ENCODE measurements at regions of chr11 and their contacts with region 1.

Region 1: GRCh38 chr11:129750349-129751292 is 65.0 kb upstream of the TMEM45B start:
- DNase-seq: peak; percentile 80 to 93
- H3K4me3 ChIP-seq: peak overlapping the region; percentile 18; the same call in 1 of the 2 replicates
- H3K4me3 Mint-ChIP-seq: peak overlapping the region; percentile 50
- H3K27ac Mint-ChIP-seq: no peak overlapping the region
- H3K4me1 ChIP-seq: peaks cover 5% of the 10 kb centered on the region
- H3K4me1 Mint-ChIP-seq: no peaks in the 10 kb centered on the region
- H3K27me3 ChIP-seq: no peaks in the 10 kb centered on the region
- H3K27me3 Mint-ChIP-seq: no peaks in the 10 kb centered on the region
- CTCF ChIP-seq: peak; percentile 100

Region 2: GRCh38 chr11:128884703-128885338 is 865.8 kb before region 1 on chr11:
- CTCF ChIA-PET with region 1: no interaction called
- POLR2A ChIA-PET with region 1: no interaction called
- intact Hi-C with region 1: loop called (anchors 2 kb)
- DNase-seq: peak; percentile 78 to 91
- H3K4me3 ChIP-seq: no peak overlapping the region
- H3K4me3 Mint-ChIP-seq: no peak overlapping the region
- H3K27ac Mint-ChIP-seq: no peak overlapping the region
- H3K4me1 ChIP-seq: no peaks in the 10 kb centered on the region; the same call in 1 of the 2 replicates
- H3K4me1 Mint-ChIP-seq: no peaks in the 10 kb centered on the region
- H3K27me3 ChIP-seq: no peaks in the 10 kb centered on the region; the same call in none of the 2 replicates
- H3K27me3 Mint-ChIP-seq: peaks cover 33% of the 10 kb centered on the region
- CTCF ChIP-seq: peak; percentile 96 to 97

Region 3: GRCh38 chr11:129410395-129410960 is 340.1 kb before region 1 on chr11:
- CTCF ChIA-PET with region 1: no interaction called
- POLR2A ChIA-PET with region 1: no interaction called
- intact Hi-C with region 1: loop called (anchors 1 kb)
- DNase-seq: peak; percentile 59 to 65
- H3K4me3 ChIP-seq: no peak overlapping the region
- H3K4me3 Mint-ChIP-seq: no peak overlapping the region
- H3K27ac Mint-ChIP-seq: no peak overlapping the region
- H3K4me1 ChIP-seq: peaks cover 10% of the 10 kb centered on the region; the same call in 1 of the 2 replicates
- H3K4me1 Mint-ChIP-seq: peaks cover 14% of the 10 kb centered on the region
- H3K27me3 ChIP-seq: no peaks in the 10 kb centered on the region
- H3K27me3 Mint-ChIP-seq: no peaks in the 10 kb centered on the region
- CTCF ChIP-seq: peak; percentile 56 to 74

Region 4: GRCh38 chr11:129695575-129696308 is 54.9 kb before region 1 on chr11:
- CTCF ChIA-PET with region 1: interaction called, 12 read pairs
- POLR2A ChIA-PET with region 1: no interaction called
- intact Hi-C with region 1: loop called (anchors 1 kb)
- DNase-seq: peak; percentile 76 to 83
- H3K4me3 ChIP-seq: no peak overlapping the region
- H3K4me3 Mint-ChIP-seq: no peak overlapping the region
- H3K27ac Mint-ChIP-seq: no peak overlapping the region
- H3K4me1 ChIP-seq: peaks cover 7% of the 10 kb centered on the region; the same call in 1 of the 2 replicates
- H3K4me1 Mint-ChIP-seq: peaks cover 5% of the 10 kb centered on the region
- H3K27me3 ChIP-seq: no peaks in the 10 kb centered on the region
- H3K27me3 Mint-ChIP-seq: no peaks in the 10 kb centered on the region
- CTCF ChIP-seq: peak; percentile 83 to 92

Region 5: DNA sequence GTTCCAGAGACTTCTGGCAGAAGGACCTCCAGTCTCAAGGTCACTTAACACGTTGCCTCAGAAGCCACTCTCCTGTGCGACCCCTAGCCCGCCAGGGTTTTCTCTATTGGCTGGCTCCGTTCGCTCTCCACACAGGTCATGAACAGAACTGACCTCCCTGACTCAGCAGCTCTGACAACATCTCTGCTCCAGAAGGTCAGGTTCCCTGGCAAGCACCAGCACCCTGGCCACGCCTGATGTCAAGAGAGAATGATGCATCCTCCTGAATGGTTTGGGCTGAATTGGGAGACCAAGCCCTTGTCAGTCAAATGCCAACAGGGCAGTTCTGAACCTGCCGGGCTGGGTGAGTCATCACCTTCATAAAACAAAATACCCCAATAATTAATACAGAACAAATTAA is 19.3 kb before region 1 on chr11:
- CTCF ChIA-PET with region 1: interaction called, 4 read pairs
- POLR2A ChIA-PET with region 1: no interaction called
- intact Hi-C with region 1: loop called (anchors 2 kb)
- DNase-seq: no peak
- H3K4me3 ChIP-seq: no peak overlapping the region
- H3K4me3 Mint-ChIP-seq: no peak overlapping the region
- H3K27ac Mint-ChIP-seq: no peak overlapping the region
- H3K4me1 ChIP-seq: peaks cover 4% of the 10 kb centered on the region; the same call in 1 of the 2 replicates
- H3K4me1 Mint-ChIP-seq: peaks cover 7% of the 10 kb centered on the region
- H3K27me3 ChIP-seq: no peaks in the 10 kb centered on the region
- H3K27me3 Mint-ChIP-seq: no peaks in the 10 kb centered on the region
- CTCF ChIP-seq: no peak

Region 6: DNA sequence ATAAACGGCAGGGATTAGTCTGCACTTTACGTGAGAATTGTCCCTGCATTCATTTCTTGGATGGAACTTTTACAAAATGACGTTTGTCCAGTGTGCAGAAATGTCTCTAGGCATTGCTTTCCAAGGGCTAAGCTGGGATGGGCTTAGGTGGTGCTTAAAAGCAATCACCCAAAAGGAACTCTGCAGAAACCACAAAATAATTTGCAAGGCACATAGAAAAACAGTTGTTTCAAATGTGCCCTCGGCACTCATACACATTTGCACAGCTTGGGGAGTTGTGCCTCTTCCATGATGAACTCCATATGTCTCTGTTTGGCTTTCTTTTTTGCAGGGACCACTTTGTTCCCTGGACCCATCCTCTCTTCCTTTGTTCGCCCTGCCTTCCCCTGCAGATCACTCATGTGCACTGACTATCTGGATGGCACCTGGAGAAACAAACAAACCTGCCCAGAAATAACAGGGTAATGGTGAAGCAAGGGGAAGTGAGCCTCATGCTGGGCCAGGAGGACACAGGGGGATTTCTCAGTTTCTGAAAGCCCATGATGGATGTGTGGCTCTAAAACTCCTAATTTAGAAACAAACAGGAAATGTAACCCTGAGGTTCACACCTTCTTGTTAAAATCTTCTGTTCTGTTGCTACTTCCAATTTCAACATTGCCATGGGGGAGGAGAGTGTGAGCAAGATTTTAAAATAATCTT is 1015.5 kb after region 1 on chr11:
- CTCF ChIA-PET with region 1: no interaction called
- POLR2A ChIA-PET with region 1: no interaction called
- intact Hi-C with region 1: no loop called
- DNase-seq: no peak
- H3K4me3 ChIP-seq: no peak overlapping the region
- H3K4me3 Mint-ChIP-seq: no peak overlapping the region
- H3K27ac Mint-ChIP-seq: no peak overlapping the region
- H3K4me1 ChIP-seq: no peaks in the 10 kb centered on the region
- H3K4me1 Mint-ChIP-seq: no peaks in the 10 kb centered on the region
- H3K27me3 ChIP-seq: no peaks in the 10 kb centered on the region
- H3K27me3 Mint-ChIP-seq: peaks cover 14% of the 10 kb centered on the region
- CTCF ChIP-seq: no peak